Activated CD8-positive, alpha-beta memory T cell treated with anti-CD3 and anti-CD28 coated beads, Interleukin-2, amount 10 ng/mL, durations not matched to agents 7 days and 5 days (primary cell): ENCODE measurements at regions of chr16 and their contacts with region 1.

Region 1: GRCh38 chr16:50806099-50807062 is 64.5 kb downstream of the CYLD start:
- DNase-seq: peak; percentile 90
- ATAC-seq: peak; percentile 98
- H3K4me3 Mint-ChIP-seq: peak overlapping the region; percentile 72
- H3K27ac Mint-ChIP-seq: peak overlapping the region; percentile 78
- H3K4me1 Mint-ChIP-seq: peaks cover 11% of the 10 kb centered on the region
- H3K27me3 Mint-ChIP-seq: no peaks in the 10 kb centered on the region

Region 2: DNA sequence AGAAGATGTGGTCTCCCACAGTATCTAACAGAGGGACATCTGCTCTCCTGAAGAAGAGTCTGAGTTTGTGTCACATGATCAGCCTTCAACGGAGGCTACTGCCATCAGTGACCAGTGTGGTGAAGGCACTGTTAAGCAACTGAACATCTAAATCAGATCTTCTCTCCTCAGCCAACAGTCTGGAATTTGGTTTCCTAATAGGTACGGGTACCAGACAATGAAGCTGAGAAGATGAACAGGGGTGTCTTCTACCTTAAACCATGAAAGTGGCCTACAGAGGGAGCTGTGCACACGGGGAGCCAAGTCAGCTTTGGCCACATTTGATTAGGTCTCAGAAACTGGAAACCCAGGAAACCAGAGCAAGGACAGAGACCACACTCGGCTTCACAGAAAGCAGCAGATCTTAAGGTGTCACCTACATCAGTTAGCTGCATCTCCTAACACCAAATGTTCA is 479.4 kb before region 1 on chr16:
- CTCF ChIA-PET with region 1: interaction called, 50 read pairs
- DNase-seq: peak; percentile 88
- ATAC-seq: peak; percentile 97
- H3K4me3 Mint-ChIP-seq: no peak overlapping the region
- H3K27ac Mint-ChIP-seq: peak overlapping the region; percentile 69
- H3K4me1 Mint-ChIP-seq: peaks cover 50% of the 10 kb centered on the region
- H3K27me3 Mint-ChIP-seq: no peaks in the 10 kb centered on the region

Region 3: DNA sequence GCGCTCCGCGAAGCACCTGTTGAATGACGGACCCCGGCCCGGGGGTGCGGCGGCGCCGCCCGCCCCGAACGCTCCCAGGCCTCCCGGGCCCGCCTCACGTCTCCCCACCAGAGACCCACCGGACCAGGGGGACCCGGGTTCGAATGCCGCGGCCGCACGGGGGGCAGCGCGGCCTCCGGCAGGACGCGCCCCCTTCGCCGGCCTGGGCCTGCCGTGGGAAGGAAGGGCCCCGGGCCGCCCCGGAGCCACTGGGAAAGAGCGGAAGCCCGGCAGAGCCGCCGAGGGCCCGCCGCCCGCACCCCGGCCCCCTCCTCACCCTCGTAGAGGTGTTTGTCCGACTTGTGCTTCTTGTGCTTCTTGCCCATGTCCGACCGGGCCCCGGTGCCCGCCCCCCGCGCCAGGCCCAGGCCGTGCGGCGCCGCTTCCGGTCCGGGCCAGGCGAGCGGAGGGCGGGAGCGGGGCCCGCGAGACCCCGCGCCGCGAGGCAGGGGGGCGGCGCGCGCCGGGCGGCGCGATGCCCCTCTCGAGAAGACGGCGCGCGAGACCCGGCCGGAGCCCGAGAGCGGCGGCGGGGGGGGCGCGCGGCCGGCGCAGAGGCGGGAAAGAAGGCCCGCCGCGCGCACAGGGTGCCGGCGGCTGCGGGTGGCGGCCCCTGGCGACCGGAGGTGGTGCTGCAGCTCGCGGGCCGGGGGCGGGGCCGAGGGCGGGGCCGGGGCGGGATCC is 437.8 kb before region 1 on chr16 and contains the start of gene BRD7:
- CTCF ChIA-PET with region 1: interaction called, 40 read pairs
- DNase-seq: peak; percentile 70
- ATAC-seq: peak; percentile 86
- H3K4me3 Mint-ChIP-seq: peak within 1 kb of the TSS; percentile 95
- H3K27ac Mint-ChIP-seq: peak within 1 kb of the TSS; percentile 88
- H3K4me1 Mint-ChIP-seq: peaks cover 41% of the 10 kb centered on the region
- H3K27me3 Mint-ChIP-seq: peaks cover 1% of the 10 kb centered on the region
- total RNA-seq, gene BRD7: 85.0 to 102 TPM

Region 4: DNA sequence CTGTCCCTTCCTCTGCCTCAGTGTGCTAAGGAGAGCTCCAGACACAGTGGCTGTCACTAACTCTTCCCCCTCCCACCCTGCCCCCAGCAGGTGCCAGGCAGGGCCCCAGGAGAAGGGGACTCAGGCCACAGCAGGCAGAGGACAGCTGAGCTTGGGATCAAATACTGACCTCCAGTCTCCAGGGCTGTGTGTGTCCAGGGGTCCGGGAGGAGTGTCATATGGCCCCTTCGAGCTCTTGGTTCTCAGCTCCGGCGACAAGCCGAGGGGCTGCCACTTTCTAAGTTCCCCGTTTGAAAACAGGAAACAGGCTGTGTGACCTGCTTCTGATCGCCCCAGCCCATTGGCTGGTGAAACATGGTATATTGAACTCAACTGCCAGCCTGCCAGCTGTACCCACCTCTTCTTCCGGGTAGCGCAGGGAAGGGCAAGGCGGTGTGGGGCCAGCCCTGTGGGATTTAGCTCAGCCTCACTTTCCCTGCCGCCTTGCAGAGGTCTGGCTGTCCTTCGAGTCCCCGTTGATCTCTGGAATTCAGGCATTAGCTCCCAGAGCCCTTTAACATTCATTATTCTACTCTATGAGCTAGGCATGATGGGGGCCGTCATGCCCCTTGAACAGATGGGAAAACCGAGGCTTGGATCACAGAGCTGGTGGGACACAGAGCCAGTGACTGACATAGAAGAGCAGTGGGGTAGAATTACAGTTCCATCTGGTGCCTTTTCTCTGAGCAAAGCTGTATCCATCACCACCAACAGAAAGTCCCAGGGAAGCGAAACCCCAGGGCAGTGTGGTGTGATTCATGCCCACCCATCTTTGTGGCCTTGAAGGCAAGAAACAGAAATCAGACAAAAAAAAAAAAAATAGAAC is 125.1 kb before region 1 on chr16 and contains the start of gene SNX20:
- CTCF ChIA-PET with region 1: interaction called, 15 read pairs
- DNase-seq: peak; percentile 82
- ATAC-seq: peak; percentile 67
- H3K4me3 Mint-ChIP-seq: peak within 1 kb of the TSS; percentile 81
- H3K27ac Mint-ChIP-seq: peak within 1 kb of the TSS; percentile 93
- H3K4me1 Mint-ChIP-seq: peaks cover 84% of the 10 kb centered on the region
- H3K27me3 Mint-ChIP-seq: no peaks in the 10 kb centered on the region
- total RNA-seq, gene SNX20: 60.0 to 72.1 TPM

Region 5: DNA sequence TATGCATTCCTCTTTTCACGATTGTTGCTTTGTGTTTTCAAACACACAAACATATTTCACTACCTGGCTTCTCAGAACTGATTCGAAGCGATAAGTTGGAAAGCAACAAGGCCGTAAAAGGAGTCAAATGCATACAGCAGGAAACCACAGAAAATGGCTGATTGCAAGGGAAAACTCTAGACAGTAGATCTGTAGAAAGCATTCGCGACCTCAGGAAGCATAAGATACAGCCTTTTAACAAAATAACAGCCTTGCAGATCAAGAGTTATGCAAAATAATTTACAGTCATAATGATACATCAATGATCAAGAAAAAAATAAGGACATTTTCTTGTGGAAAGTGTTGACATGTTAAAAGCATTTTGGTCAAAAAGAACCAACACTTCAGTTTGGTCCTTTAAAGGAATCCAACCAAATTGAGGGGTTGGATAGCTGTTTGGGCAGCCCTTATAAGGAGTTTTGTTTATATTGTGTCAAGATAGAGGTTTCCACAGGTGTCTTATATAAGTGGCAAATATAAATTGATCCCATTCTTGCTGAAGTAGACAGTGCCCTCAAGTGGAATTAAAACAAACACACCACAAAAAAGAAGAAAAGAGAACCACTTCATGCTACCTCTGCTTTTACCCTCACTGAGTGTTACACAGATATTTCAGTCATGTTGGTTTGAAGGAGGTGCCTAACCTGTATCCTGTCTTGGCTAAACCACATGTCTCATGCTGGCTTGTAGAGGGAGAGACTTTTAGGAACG is 59.0 kb before region 1 on chr16:
- CTCF ChIA-PET with region 1: interaction called, 51 read pairs
- DNase-seq: peak; percentile 60
- ATAC-seq: peak; percentile 70
- H3K4me3 Mint-ChIP-seq: peak overlapping the region; percentile 72
- H3K27ac Mint-ChIP-seq: peak overlapping the region; percentile 92
- H3K4me1 Mint-ChIP-seq: peaks cover 62% of the 10 kb centered on the region
- H3K27me3 Mint-ChIP-seq: no peaks in the 10 kb centered on the region

Region 6: DNA sequence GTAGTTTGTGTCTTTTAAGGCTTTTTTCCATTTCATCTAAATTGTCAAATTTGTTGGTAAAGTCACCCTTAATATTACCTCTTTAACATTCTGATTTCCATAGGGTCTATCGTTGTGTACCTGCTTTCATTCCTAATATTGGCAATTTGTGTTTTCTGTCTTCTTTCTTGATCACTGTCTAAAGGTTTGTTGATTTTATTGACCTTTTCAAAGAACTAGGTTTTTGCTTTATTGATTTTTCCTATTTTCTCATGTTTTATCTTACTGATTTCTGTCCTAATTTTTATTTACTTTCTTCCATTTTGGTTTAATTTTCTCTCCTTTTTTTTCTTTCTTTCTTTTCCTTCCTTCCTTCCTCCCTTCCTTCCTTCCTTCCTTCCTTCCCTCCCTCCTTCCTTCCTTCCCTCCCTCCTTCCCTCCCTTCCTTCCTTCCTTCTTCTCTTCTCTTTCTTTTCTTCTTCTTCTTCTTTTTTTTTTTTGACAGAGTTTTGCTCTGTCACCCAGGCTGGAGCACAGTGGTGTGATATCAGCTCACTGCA is 21.9 kb after region 1 on chr16:
- CTCF ChIA-PET with region 1: no interaction called
- DNase-seq: no peak
- ATAC-seq: no peak
- H3K4me3 Mint-ChIP-seq: no peak overlapping the region
- H3K27ac Mint-ChIP-seq: no peak overlapping the region
- H3K4me1 Mint-ChIP-seq: no peaks in the 10 kb centered on the region
- H3K27me3 Mint-ChIP-seq: peaks cover 42% of the 10 kb centered on the region

Region 7: DNA sequence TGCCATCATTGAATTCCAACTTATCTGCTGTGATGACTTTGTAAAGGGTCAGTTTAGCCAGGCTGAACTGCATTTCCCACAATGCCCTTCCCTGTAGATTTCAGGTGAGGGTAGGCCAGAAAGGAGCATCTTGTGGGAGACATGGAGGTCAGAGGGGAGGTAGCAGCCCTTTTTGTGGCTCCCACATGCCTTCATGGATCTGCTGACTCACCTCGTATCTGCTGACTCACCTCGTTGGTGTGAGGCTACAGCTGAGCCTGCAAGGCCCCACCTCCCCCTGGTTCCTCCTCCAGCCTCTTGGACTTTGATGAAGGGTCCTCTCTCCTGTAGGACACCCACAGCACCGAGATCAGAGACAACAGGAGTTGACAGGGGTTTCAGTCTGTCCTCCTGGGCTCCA is 242.2 kb after region 1 on chr16:
- CTCF ChIA-PET with region 1: no interaction called
- DNase-seq: no peak
- ATAC-seq: no peak
- H3K4me3 Mint-ChIP-seq: no peak overlapping the region
- H3K27ac Mint-ChIP-seq: no peak overlapping the region
- H3K4me1 Mint-ChIP-seq: no peaks in the 10 kb centered on the region
- H3K27me3 Mint-ChIP-seq: no peaks in the 10 kb centered on the region